ENCODE measurements at regions of chr6 and their contacts with region 1.

Region 1: GRCh38 chr6:31958741-31959739 is at the starts of genes NELFE and SKIC2:
- DNase-seq: peak; percentile 93
- H3K4me3 ChIP-seq: peak within 1 kb of the TSS; percentile 100
- H3K27ac ChIP-seq: peak within 1 kb of the TSS; percentile 52
- H3K27me3 ChIP-seq: no peaks in the 10 kb centered on the region
- CTCF ChIP-seq: no peak
- polyA plus RNA-seq, gene NELFE: 51.4 and 55.7 TPM in 2 replicates
- polyA plus RNA-seq, gene SKIC2: 26.0 and 30.4 TPM in 2 replicates

Region 2: DNA sequence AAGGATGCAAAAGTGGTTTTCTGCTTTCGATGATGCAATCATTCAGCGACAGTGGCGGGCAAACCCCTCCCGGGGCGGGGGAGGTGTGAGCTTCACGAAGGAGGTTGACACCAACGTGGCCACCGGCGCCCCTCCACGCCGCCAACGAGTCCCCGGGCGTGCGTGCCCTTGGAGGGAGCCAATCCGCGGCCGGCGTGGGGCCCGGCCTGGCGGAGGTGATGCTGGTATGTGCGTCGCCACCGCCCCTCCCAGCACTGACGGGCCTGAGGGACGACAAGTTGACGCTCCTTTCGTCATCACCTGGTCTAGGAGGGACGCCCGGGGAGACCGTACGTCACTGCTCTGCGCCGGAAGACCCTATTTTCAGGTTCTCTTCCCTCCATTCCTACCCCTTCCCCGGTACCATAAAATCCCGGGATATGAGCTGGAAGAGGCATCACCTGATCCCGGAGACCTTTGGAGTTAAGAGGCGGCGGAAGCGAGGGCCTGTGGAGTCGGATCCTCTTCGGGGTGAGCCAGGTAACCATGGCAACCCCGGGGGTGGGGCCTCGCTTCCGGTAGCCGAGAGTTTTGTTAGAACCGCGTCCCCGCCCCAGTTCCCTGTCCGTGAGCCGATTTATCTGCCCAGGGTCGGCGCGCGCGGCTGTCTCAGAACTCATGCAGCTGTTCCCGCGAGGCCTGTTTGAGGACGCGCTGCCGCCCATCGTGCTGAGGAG is 13.1 kb after region 1 on chr6 and contains the start of gene DXO:
- CTCF ChIA-PET with region 1: no interaction called
- POLR2A ChIA-PET with region 1: interaction called, 10 read pairs
- DNase-seq: peak; percentile 94
- H3K4me3 ChIP-seq: peak within 1 kb of the TSS; percentile 96
- H3K27ac ChIP-seq: peak within 1 kb of the TSS; percentile 98
- H3K27me3 ChIP-seq: no peaks in the 10 kb centered on the region
- CTCF ChIP-seq: no peak
- polyA plus RNA-seq, gene DXO: 11.4 and 14.9 TPM in 2 replicates